Activated T-helper 1 cell treated with anti-CD3 and anti-CD28 coated beads, Interleukin-12 subunit alpha, Interleukin-12 subunit beta, Interleukin-2, Interleukin-4 antibody, amounts not matched to agents 30 ng/mL and 10 ng/mL and 1 ng/mL, durations not matched to agents 14 hours and 24 hours and 36 hours (primary cell): ENCODE measurements at regions of chr12 and their contacts with region 1.

Region 1: GRCh38 chr12:68163560-68164081 is 4.1 kb upstream of the IFNG start:
- DNase-seq: peak; percentile 34
- H3K4me3 Mint-ChIP-seq: peak overlapping the region; percentile 61
- H3K27ac Mint-ChIP-seq: peak overlapping the region; percentile 78
- H3K4me1 Mint-ChIP-seq: peaks cover 71% of the 10 kb centered on the region
- H3K27me3 Mint-ChIP-seq: no peaks in the 10 kb centered on the region

Region 2: DNA sequence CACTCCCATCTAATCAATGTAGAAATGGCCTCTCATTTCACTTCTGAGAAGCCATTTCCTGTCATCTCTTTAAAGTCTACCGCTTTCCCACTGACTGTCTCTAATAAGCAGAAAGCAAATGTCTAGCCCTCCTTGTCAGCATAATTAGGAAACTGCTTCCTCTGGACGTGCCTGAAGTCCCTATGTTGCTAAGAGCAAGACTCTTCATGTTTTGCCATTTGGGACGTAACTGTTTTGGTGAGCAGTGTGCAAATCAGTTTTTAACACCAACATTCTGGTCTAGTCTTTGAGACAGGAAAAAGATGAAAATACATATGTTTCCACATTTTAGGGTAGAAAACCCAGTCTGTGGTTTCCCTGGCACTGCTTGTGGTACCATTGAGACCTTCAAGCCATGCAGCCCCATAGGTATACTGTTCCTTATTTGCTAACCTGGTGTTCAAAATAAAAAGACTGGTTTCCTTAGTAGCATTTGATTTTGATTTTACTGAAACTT is 26.2 kb before region 1 on chr12:
- intact Hi-C with region 1: loop called (anchors 1 kb)
- DNase-seq: no peak
- H3K4me3 Mint-ChIP-seq: peak overlapping the region; percentile 61
- H3K27ac Mint-ChIP-seq: peak overlapping the region; percentile 91
- H3K4me1 Mint-ChIP-seq: peaks cover 75% of the 10 kb centered on the region
- H3K27me3 Mint-ChIP-seq: no peaks in the 10 kb centered on the region

Region 3: DNA sequence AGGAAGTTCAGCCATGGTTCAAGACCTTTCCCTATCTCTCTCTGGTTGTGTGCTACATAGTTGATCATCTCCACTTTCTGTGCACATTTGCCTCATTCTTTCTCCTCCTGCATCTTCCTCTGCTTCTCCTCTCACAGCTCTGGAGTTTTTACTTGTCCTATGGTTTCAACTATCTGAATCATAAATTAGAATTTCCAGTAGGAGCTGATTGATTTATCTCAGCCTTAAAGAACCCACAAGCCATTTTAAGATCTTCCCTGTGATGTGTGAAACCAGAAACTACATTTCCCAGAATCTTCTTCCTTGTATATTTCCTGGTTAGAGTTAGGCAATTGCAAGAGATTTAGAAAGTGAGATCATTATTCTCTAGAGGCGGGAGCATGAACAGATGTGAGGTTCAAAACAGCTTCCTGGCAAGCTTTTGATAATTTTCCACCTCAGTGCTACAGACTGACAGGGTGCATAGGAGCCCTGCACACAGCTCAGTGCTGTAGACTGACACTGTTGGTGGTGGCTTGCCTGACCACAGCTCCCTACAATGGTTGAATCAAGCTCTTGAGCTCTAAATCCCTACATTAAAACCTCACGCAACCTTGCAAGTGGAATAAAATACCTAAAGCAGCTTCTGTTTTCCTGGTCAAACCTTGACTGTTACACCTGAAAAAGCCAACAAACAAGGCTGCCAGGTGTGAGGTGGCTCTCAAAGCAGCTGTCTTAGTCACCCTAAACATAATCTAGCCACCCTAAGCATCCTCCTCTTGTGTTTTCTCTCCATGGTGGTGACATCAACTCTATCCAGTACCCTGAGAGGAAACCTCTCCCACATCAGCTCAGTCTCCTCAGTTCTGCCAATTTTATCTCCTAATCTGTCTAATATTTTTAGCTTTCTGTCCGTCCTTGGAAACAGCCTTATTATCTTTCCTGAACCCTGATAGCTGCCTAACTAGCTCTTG is 17.4 kb after region 1 on chr12:
- intact Hi-C with region 1: loop called (anchors 2 kb)
- DNase-seq: peak; percentile 67
- H3K4me3 Mint-ChIP-seq: peak overlapping the region; percentile 34
- H3K27ac Mint-ChIP-seq: peak overlapping the region; percentile 91
- H3K4me1 Mint-ChIP-seq: peaks cover 85% of the 10 kb centered on the region
- H3K27me3 Mint-ChIP-seq: no peaks in the 10 kb centered on the region

Region 4: GRCh38 chr12:68203460-68203875 is 39.8 kb after region 1 on chr12:
- intact Hi-C with region 1: loop called (anchors 1 kb)
- DNase-seq: no peak
- H3K4me3 Mint-ChIP-seq: no peak overlapping the region
- H3K27ac Mint-ChIP-seq: peak overlapping the region; percentile 19
- H3K4me1 Mint-ChIP-seq: peaks cover 75% of the 10 kb centered on the region
- H3K27me3 Mint-ChIP-seq: no peaks in the 10 kb centered on the region

Region 5: DNA sequence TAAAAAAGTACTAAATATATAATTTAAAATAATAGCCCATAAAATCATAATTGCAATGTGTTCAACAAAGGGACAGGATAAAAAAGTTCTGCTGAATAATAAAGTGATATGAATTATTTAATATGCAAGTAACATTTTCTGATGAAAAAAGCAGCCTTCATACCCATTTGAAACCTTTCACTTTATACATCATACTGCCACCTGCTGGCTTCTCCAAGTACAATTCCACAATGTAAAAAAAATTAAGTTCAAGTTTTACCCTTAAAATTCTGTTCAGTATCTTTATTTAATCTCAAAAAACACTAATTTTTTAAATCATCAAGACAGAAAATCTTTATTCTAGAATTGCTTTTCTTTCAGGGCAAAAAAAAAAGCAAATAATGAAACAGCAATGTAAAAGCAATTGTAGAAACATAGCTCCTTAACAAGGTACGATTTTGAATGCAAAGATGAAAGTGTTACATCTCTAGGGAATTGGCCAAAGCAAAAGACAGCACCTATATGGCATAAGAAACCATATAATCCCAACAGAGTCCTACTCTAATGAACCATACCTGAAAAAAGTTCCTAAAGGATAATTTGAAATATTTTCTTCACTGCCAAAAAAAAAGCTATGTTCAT is 153.5 kb after region 1 on chr12:
- intact Hi-C with region 1: loop called (anchors 1 kb)
- DNase-seq: no peak
- H3K4me3 Mint-ChIP-seq: no peak overlapping the region
- H3K27ac Mint-ChIP-seq: no peak overlapping the region
- H3K4me1 Mint-ChIP-seq: peaks cover 17% of the 10 kb centered on the region
- H3K27me3 Mint-ChIP-seq: no peaks in the 10 kb centered on the region

Region 6: DNA sequence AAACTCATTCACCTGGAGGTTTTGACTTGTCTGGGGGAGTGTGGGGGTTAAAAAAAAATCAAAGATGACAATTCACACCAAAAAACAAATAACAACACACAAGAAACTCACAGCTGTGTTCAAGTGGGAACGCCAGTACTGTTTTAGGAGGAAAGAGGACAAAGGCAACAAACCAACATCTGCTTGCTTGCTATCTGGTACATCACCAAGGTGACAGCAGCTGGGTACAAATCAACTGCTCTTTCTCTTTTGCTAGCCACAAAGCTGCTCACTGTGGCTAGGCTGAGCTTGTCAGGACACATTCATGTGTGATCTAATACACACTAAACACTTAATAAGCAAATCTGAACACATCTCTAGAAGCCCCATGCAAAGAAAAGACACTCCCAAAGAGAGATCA is 319.0 kb after region 1 on chr12:
- intact Hi-C with region 1: loop called (anchors 1 kb)
- DNase-seq: peak; percentile 44
- H3K4me3 Mint-ChIP-seq: peak overlapping the region; percentile 66
- H3K27ac Mint-ChIP-seq: peak overlapping the region; percentile 91
- H3K4me1 Mint-ChIP-seq: peaks cover 69% of the 10 kb centered on the region
- H3K27me3 Mint-ChIP-seq: no peaks in the 10 kb centered on the region